ENCODE measurements at regions of chr10 and their contacts with region 1.

Region 1: DNA sequence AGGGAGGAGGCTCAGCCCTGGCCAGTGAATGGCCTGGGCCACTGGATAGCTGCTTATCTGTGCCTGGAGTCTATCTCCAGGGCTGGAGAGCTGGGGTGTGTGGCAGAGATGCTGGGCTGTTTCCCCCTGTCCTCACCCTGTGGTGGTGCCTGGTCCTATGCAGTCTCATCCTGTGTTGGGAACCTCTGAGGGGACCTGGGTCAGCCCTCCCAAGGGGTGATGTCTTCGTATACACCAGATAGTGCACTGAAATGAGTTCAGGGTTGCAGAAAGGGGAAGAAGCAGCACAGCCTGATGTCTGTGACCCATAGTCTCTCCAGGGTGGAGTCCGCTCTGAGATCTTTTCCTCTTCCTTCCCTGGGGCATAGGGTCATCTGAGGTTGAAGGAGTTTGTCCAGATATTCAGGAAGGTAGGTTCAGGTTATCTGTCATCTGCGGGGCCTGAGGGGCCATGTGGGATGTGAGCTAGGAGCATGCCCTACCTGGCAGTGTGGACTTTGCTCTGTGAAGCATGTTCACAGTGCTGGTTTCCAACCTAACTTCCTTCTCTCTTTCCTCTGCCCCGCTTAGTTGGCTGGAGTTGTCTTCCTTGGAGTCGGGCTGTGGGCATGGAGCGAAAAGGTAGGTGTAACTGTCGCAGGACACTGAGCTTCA is 33.4 kb upstream of the SH2D4B start:
- DNase-seq: no peak
- ATAC-seq: no peak
- H3K4me3 Mint-ChIP-seq: no peak overlapping the region
- H3K27ac Mint-ChIP-seq: peak overlapping the region; percentile 82
- H3K4me1 Mint-ChIP-seq: peaks cover 61% of the 10 kb centered on the region
- H3K27me3 Mint-ChIP-seq: no peaks in the 10 kb centered on the region
- CTCF ChIP-seq: no peak

Region 2: DNA sequence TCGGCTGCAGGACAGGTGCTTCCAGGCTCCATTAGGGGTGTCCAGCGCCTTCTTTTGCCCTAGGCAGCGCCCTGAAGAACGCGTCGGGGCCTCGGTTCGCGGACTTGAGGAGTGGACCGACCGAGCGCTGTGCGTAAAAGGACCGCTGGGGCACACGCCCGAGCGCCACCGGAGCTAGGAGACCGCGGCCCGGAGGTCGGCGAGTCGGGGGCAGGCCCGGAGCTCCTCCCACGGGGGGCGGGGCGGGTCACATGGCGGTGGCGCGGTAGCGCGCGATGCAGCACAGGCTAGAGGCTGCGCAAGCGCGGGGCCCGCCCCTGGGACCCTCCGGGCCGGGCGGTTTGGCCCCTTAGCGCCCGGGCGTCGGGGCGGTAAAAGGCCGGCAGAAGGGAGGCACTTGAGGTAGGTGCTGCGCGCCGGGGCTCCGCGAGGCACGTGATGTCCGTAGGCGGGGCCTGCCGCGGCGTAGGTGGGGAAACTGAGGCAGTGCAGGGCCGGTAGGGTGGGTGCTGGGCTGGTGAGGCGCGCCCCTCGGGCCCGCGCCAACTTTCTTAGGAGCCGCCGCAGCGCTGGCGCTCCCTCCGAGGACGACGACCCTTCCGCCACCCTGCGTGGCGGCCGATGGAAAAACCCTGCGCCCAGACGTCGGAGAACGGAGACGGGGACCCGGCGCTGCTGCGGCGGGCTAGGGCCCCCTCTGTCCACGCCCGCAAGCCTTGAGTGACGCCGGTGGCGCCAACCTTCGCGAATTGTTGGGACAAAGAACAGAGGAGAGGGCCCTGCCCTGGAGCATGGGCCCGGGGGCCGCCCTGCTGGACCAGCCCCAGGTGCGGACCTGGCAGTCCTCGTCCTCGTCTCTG is 95.8 kb before region 1 on chr10 and contains the start of gene PRXL2A:
- CTCF ChIA-PET with region 1: interaction called, 39 read pairs
- POLR2A ChIA-PET with region 1: interaction called, 6 read pairs
- intact Hi-C with region 1: no loop called
- DNase-seq: peak; percentile 92
- ATAC-seq: peak; percentile 92
- H3K4me3 Mint-ChIP-seq: peak within 1 kb of the TSS; percentile 76
- H3K27ac Mint-ChIP-seq: peak within 1 kb of the TSS; percentile 81
- H3K4me1 Mint-ChIP-seq: peaks cover 34% of the 10 kb centered on the region
- H3K27me3 Mint-ChIP-seq: peaks cover 3% of the 10 kb centered on the region
- CTCF ChIP-seq: no peak
- total RNA-seq, gene PRXL2A: 21.0 to 22.7 TPM

Region 3: DNA sequence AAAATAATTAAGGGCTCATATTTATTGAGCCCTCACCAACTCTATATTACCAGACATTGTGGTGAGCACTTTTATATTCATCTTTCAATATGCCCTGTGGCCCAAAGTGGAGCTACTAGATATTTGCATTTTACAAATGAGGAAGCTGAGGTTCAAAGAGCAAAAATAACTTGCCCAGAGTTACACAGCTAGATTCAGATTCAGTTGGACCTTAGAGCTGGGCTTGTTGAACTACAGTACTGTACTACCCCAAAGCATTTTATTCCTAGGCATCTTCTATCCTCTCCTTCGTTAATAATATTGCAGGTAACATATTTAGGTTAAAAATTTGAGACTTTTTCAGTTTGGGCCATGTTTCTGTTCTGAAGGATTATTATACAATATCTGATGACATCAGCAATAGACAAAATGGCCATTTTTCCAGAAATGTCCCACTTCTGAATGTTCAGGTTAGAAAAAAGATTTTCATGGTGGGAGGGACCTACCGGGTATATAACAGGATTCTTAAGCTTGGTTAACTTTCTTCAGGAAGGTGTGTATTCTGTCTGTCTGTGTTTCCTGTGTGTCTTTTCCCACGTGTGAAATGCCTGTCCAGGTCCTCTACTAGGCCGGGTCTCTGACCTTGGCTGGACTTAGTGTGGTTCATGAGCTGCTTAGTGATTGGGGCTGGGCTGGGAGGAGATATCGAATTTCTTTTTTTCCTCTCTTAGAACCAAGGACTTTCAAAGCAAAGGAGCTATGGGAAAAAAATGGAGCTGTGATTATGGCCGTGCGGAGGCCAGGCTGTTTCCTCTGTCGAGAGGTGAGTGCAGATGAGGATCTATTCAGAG is 82.4 kb before region 1 on chr10:
- CTCF ChIA-PET with region 1: interaction called, 11 read pairs
- POLR2A ChIA-PET with region 1: interaction called, 3 read pairs
- intact Hi-C with region 1: no loop called
- DNase-seq: no peak
- ATAC-seq: no peak
- H3K4me3 Mint-ChIP-seq: no peak overlapping the region
- H3K27ac Mint-ChIP-seq: no peak overlapping the region
- H3K4me1 Mint-ChIP-seq: no peaks in the 10 kb centered on the region
- H3K27me3 Mint-ChIP-seq: no peaks in the 10 kb centered on the region
- CTCF ChIP-seq: no peak

Region 4: GRCh38 chr10:80437231-80437630 is 67.1 kb before region 1 on chr10:
- CTCF ChIA-PET with region 1: interaction called, 1,114 read pairs
- POLR2A ChIA-PET with region 1: interaction called, 3 read pairs
- intact Hi-C with region 1: no loop called
- DNase-seq: no peak
- ATAC-seq: no peak
- H3K4me3 Mint-ChIP-seq: no peak overlapping the region
- H3K27ac Mint-ChIP-seq: no peak overlapping the region
- H3K4me1 Mint-ChIP-seq: no peaks in the 10 kb centered on the region
- H3K27me3 Mint-ChIP-seq: no peaks in the 10 kb centered on the region
- CTCF ChIP-seq: no peak

Region 5: GRCh38 chr10:80464557-80465450 is 39.5 kb before region 1 on chr10:
- CTCF ChIA-PET with region 1: interaction called, 1,114 read pairs
- POLR2A ChIA-PET with region 1: interaction called, 24 read pairs
- intact Hi-C with region 1: no loop called
- DNase-seq: peak; percentile 60
- ATAC-seq: no peak
- H3K4me3 Mint-ChIP-seq: peak overlapping the region; percentile 71
- H3K27ac Mint-ChIP-seq: peak overlapping the region; percentile 97
- H3K4me1 Mint-ChIP-seq: peaks cover 94% of the 10 kb centered on the region
- H3K27me3 Mint-ChIP-seq: no peaks in the 10 kb centered on the region
- CTCF ChIP-seq: no peak

Region 6: DNA sequence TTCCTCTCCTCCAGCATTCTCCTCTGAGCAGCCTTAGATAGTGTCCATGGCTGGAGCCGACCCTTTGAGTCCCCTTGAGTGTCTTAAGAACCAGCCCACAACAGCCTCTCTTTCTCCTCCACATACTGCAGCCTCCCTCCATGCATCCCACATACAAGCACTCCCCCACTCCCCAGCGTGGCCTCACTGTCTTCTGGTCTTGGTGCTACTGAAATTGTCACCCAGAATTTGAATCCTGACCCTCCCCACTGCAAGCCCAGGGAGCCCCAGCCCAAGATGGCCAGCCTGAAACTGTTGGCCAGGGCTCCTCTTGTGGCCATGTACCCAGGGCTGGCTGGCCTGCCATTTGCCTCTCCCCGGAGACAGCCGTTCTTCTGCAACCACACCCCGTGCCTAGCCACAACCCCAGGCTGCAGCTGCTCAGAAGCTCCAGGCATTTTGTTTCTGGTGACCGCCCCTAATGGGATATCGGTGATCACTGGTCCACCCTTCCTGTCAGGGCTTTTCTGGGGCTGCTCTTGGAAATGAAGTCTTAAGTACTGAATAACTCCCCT is 14.6 kb after region 1 on chr10:
- CTCF ChIA-PET with region 1: interaction called, 36 read pairs
- POLR2A ChIA-PET with region 1: interaction called, 4 read pairs
- intact Hi-C with region 1: no loop called
- DNase-seq: no peak
- ATAC-seq: no peak
- H3K4me3 Mint-ChIP-seq: no peak overlapping the region
- H3K27ac Mint-ChIP-seq: peak overlapping the region; percentile 6
- H3K4me1 Mint-ChIP-seq: peaks cover 41% of the 10 kb centered on the region
- H3K27me3 Mint-ChIP-seq: no peaks in the 10 kb centered on the region
- CTCF ChIP-seq: no peak

Region 7: GRCh38 chr10:80945264-80945880 is 441.1 kb after region 1 on chr10:
- CTCF ChIA-PET with region 1: no interaction called
- POLR2A ChIA-PET with region 1: no interaction called
- intact Hi-C with region 1: no loop called
- DNase-seq: no peak
- ATAC-seq: no peak
- H3K4me3 Mint-ChIP-seq: no peak overlapping the region
- H3K27ac Mint-ChIP-seq: no peak overlapping the region
- H3K4me1 Mint-ChIP-seq: no peaks in the 10 kb centered on the region
- H3K27me3 Mint-ChIP-seq: peaks cover 9% of the 10 kb centered on the region
- CTCF ChIP-seq: no peak